ENCODE measurements at regions of chr2 and their contacts with region 1.

Region 1: GRCh38 chr2:188333751-188334524 is 42.3 kb downstream of the GULP1 start:
- DNase-seq: peak in 3 of 4 donors; percentile 11 to 39 (median 30)
- ATAC-seq: peak; percentile 71
- H3K4me3 ChIP-seq: no peak overlapping the region
- H3K27ac ChIP-seq: peak overlapping the region; percentile 19 to 58 (median 52)
- H3K4me1 ChIP-seq: peaks cover 12% of the 10 kb centered on the region
- H3K27me3 ChIP-seq: no peaks in the 10 kb centered on the region
- CTCF ChIP-seq: no peak
- POLR2A ChIP-seq: peak in 1 of 3 donors; percentile 14

Region 2: DNA sequence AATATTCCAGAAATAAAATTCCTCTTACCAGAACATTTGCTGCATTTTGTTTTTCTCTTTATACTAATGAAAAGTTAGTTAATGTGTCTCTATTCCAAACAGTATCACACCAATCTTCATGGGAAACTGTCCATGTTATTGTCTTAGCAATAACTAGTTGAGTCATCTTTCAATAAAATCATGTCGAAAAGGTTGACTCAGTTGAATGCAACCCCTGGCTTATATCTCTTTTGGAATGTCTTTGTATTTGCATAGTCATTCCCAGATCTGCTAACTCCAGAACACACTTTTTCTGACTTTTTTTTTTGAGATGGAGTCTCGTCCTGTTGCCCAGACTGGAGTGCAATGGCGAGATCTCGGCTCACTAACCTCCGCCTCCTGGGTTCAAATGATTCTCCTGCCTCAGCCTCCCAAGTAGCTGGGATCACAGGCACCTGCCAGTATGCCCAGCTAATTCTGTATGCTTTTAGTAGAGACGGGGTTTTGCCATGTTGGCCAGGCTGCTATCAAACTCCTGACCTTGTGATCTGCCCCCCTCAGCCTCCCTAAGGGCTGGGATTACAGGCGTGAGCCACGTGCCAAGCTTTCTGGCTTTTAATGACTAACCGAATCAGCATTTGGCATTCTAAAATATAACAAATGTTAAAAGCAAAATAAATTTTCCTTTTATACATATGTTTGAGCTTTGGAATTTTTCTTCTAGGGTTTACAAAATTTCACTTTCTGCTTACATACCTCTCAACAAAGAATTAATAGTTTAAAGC is 175.4 kb before region 1 on chr2:
- intact Hi-C with region 1: no loop called
- DNase-seq: no peak
- ATAC-seq: no peak
- H3K4me3 ChIP-seq: no peak overlapping the region
- H3K27ac ChIP-seq: no peak overlapping the region
- H3K4me1 ChIP-seq: no peaks in the 10 kb centered on the region
- H3K27me3 ChIP-seq: no peaks in the 10 kb centered on the region
- CTCF ChIP-seq: no peak
- POLR2A ChIP-seq: no peak

Region 3: DNA sequence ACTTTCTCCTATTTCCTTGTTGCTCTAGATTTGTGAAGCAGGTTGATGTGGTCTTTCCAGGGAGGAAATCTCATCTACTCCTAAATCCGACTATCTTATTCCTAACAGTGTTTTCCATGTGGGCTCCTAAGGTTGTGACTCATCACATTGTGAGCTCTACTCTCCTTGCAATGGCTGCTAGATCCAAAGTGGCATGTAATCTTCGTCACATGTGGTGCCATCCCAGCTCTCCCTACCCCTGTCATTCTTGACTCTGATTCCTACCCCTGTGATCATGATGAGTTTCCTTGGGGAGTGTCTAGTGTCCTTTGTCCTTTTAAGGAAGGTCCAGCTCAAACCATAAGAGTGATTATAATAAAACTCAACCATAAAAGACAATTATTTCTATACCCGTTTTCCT is 89.6 kb before region 1 on chr2:
- intact Hi-C with region 1: no loop called
- DNase-seq: no peak
- ATAC-seq: no peak
- H3K4me3 ChIP-seq: no peak overlapping the region
- H3K27ac ChIP-seq: no peak overlapping the region
- H3K4me1 ChIP-seq: no peaks in the 10 kb centered on the region
- H3K27me3 ChIP-seq: no peaks in the 10 kb centered on the region
- CTCF ChIP-seq: no peak
- POLR2A ChIP-seq: no peak

Region 4: DNA sequence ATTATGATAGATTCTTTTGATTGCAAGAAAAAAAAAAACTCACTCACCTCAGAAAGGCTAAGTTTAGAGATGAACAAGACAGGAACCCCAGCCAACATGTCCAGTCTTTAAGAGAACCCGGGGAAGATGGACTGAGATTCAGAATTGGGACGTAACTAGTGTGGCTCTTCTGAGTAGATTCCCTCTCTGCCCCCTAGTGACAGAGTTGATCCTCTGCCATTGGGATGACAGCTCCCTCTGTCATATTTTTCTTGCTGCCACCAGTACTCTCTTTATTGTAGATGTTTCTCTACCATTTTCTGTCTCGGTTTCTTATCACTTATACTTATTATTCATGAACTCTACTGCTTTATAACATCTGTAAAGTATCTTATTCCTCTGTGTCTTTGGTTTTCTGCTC is 35.4 kb after region 1 on chr2:
- intact Hi-C with region 1: loop called (anchors 5 kb)
- DNase-seq: peak; percentile 31 to 54 (median 42)
- ATAC-seq: peak; percentile 85
- H3K4me3 ChIP-seq: no peak overlapping the region
- H3K27ac ChIP-seq: no peak overlapping the region
- H3K4me1 ChIP-seq: peaks cover 12% of the 10 kb centered on the region
- H3K27me3 ChIP-seq: no peaks in the 10 kb centered on the region
- CTCF ChIP-seq: peak; percentile 26 to 65 (median 55)
- POLR2A ChIP-seq: no peak

Region 5: GRCh38 chr2:188551671-188552070 is 217.7 kb after region 1 on chr2:
- intact Hi-C with region 1: no loop called
- DNase-seq: no peak
- ATAC-seq: no peak
- H3K4me3 ChIP-seq: no peak overlapping the region
- H3K27ac ChIP-seq: no peak overlapping the region
- H3K4me1 ChIP-seq: no peaks in the 10 kb centered on the region
- H3K27me3 ChIP-seq: no peaks in the 10 kb centered on the region
- CTCF ChIP-seq: no peak
- POLR2A ChIP-seq: no peak

Region 6: DNA sequence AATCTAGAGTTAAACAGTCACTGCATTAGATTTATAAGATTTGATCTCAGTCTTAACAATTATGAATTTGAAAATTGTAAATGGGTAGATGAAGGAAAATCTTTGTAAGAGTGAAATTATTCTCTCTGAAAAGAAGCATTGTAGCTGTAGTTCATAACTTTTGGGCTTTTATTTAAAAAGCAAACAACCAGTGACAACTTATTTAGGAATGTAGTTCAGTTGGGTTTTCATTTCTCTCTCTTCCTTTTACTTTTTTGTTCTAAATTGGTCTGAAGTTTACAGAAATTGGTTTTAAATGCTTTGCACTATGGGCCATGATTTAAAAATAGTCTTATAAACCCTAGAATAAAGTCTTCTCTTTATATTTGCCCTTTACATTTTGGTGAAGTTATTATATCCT is 254.3 kb after region 1 on chr2:
- intact Hi-C with region 1: no loop called
- DNase-seq: no peak
- ATAC-seq: no peak
- H3K4me3 ChIP-seq: no peak overlapping the region
- H3K27ac ChIP-seq: no peak overlapping the region
- H3K4me1 ChIP-seq: no peaks in the 10 kb centered on the region
- H3K27me3 ChIP-seq: no peaks in the 10 kb centered on the region
- CTCF ChIP-seq: no peak
- POLR2A ChIP-seq: no peak